Testis (tissue), 5 donors: ENCODE measurements at regions of chr12 and their contacts with region 1.

Region 1: GRCh38 chr12:109804820-109805761 is 28.1 kb downstream of the TRPV4 start:
- DNase-seq: peak; percentile 70
- H3K4me3 ChIP-seq: no peak overlapping the region
- H3K27ac ChIP-seq: no peak overlapping the region
- H3K4me1 ChIP-seq: no peaks in the 10 kb centered on the region
- H3K27me3 ChIP-seq: no peaks in the 10 kb centered on the region
- CTCF ChIP-seq: peak; percentile 85 to 98 (median 88)
- POLR2A ChIP-seq: no peak

Region 2: GRCh38 chr12:109879403-109880015 is 74.4 kb after region 1 on chr12:
- intact Hi-C with region 1: loop called (anchors 10 kb)
- DNase-seq: no peak
- H3K4me3 ChIP-seq: peak overlapping the region; percentile 73 to 76
- H3K27ac ChIP-seq: peak overlapping the region in 1 of 2 donors; percentile 53
- H3K4me1 ChIP-seq: peaks cover 4% of the 10 kb centered on the region
- H3K27me3 ChIP-seq: no peaks in the 10 kb centered on the region
- CTCF ChIP-seq: no peak
- POLR2A ChIP-seq: no peak